ENCODE measurements at regions of chr6 and their contacts with region 1.

Region 1: GRCh38 chr6:132669690-132670291 is 10.8 kb upstream of the TAAR1 start:
- DNase-seq: no peak
- ATAC-seq: peak; percentile 37 to 73 (median 54)
- H3K4me3 ChIP-seq: no peak overlapping the region
- H3K27ac ChIP-seq: peak overlapping the region in 1 of 12 donors; percentile 42
- H3K4me1 ChIP-seq: peaks cover 0 to 4% (median 0%) of the 10 kb centered on the region in 12 donors
- H3K27me3 ChIP-seq: peaks cover 0 to 3% (median 0%) of the 10 kb centered on the region in 9 donors
- CTCF ChIP-seq: peak; percentile 26 to 70 (median 49)
- POLR2A ChIP-seq: no peak

Region 2: DNA sequence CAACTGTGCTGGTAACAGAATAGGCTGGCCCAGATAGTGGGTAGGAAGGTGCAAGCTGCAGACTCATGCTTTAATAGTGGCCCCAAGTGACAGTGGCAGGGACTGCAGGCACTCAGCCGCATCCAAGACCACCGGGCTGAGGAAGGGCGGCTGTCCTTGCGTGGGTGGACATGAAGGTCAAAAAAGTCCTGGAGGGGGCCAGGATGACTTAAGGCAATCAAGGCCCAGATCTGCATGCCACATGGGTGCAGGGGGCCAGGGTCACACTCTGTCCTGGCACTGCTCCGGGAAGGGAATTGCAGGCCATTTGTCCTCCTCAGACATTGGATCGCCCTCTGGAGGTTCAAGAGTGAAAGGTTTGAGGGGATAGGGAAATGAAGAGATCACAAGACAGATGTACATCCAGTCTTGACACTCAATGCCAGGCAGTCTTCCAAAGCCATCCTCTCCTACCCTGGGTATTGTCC is 98.3 kb after region 1 on chr6:
- intact Hi-C with region 1: loop called (anchors 1 to 10 kb)
- DNase-seq: peak; percentile 28 to 65 (median 32)
- ATAC-seq: peak; percentile 49 to 94 (median 88)
- H3K4me3 ChIP-seq: peak overlapping the region in 1 of 12 donors; percentile 30
- H3K27ac ChIP-seq: no peak overlapping the region
- H3K4me1 ChIP-seq: peaks cover 0 to 8% (median 0%) of the 10 kb centered on the region in 12 donors
- H3K27me3 ChIP-seq: no peaks in the 10 kb centered on the region
- CTCF ChIP-seq: peak; percentile 19 to 64 (median 46)
- POLR2A ChIP-seq: no peak

Region 3: DNA sequence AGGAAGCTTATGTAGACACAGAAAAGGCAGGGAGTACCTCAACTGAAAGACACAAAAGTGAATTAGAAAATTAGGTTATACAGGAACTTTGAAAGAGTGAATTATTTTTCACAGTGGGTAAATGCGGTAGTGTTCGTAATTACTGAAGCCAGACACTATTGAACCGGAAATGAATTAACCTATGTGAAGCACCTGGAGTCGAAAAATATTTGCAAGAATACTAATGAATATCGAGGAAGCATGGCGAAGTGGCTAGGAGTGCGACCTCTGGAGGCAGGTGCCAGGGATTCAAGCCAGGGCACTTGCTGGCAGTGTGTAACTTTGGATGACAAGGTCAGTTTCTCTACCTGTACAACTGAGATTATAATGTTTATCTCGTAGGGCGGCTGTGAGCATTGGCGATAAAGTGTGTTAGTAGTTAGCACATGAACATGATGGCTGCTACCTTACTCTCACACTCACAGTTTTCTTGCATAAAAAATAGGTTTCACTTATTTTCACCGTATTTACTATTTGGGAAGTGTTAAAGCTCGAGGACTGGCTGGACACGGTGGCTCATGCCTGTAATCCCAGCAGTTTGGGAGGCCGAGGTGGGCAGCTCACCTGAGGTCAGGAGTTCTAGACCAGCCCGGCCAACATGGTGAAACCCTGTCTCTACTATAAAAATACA is 129.2 kb after region 1 on chr6:
- intact Hi-C with region 1: loop called in 5 of 10 experiments (anchors 1 to 10 kb)
- DNase-seq: peak; percentile 64 to 77 (median 73)
- ATAC-seq: peak; percentile 79 to 94 (median 88)
- H3K4me3 ChIP-seq: peak overlapping the region in 11 of 12 donors; percentile 36 to 92 (median 72)
- H3K27ac ChIP-seq: peak overlapping the region in 8 of 12 donors; percentile 47 to 87 (median 72)
- H3K4me1 ChIP-seq: peaks cover 0 to 9% (median 1%) of the 10 kb centered on the region in 12 donors
- H3K27me3 ChIP-seq: no peaks in the 10 kb centered on the region
- CTCF ChIP-seq: peak; percentile 50 to 86 (median 73)
- POLR2A ChIP-seq: no peak